ENCODE measurements at regions of chr2 and their contacts with region 1.

Region 1: DNA sequence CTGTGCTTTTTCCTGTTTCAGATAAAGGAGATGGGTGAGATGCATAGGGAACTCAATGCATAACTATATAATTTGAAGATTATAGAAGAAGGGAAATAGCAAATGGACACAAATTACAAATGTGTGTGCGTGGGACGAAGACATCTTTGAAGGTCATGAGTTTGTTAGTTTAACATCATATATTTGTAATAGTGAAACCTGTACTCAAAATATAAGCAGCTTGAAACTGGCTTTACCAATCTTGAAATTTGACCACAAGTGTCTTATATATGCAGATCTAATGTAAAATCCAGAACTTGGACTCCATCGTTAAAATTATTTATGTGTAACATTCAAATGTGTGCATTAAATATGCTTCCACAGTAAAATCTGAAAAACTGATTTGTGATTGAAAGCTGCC is 16.4 kb upstream of the MSH2 start:
- DNase-seq: no peak
- ATAC-seq: no peak
- H3K4me3 ChIP-seq: no peak overlapping the region
- H3K27ac ChIP-seq: no peak overlapping the region
- H3K4me1 ChIP-seq: no peaks in the 10 kb centered on the region
- H3K27me3 ChIP-seq: no peaks in the 10 kb centered on the region

Region 2: DNA sequence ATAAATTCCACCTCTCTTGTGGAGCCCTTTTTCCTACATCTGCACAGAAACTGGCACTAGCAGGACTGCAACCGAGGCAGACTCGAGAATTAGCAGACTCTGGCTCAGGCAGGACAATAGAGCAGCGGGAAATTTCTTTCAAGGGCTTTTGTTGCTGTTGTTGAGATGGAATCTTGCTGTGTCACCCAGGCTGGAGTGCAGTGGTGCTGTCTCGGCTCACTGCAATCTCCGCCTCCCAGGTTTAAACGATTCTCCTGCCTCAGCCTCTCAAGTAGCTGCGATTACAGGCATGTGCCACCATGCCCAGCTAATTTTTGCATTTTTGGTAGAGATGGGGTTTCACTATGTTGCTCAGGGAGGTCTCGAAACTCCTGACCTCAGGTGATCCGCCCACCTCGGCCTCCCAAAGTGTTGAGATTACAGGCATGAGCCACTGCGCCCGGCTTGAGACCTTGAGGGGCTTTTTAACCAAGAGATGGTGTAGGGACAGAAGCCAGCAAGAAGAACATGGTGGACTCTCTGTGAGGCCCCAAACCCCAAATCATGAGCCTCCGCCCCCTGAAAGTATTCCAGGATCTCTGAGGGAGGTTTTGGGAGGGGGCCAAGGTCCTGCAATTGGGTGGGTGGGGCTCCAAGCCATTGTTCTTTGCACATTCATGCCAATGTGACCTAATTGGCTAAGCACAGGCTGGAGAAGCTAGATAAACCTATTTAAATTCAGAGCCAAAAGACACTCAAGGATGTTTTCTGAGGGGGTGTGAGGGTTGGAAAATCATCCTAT is 52.0 kb before region 1 on chr2:
- intact Hi-C with region 1: loop called in 3 of 4 experiments (anchors 2 to 5 kb)
- DNase-seq: peak in 1 of 3 donors; percentile 58
- ATAC-seq: peak; percentile 14 to 65
- H3K4me3 ChIP-seq: no peak overlapping the region
- H3K27ac ChIP-seq: peak overlapping the region; percentile 5
- H3K4me1 ChIP-seq: peaks cover 2% of the 10 kb centered on the region
- H3K27me3 ChIP-seq: no peaks in the 10 kb centered on the region

Region 3: GRCh38 chr2:47339745-47340541 is 46.6 kb before region 1 on chr2:
- intact Hi-C with region 1: loop called (anchors 2 to 5 kb)
- DNase-seq: peak in 1 of 3 donors; percentile 28
- ATAC-seq: no peak
- H3K4me3 ChIP-seq: no peak overlapping the region
- H3K27ac ChIP-seq: no peak overlapping the region
- H3K4me1 ChIP-seq: no peaks in the 10 kb centered on the region
- H3K27me3 ChIP-seq: no peaks in the 10 kb centered on the region

Region 4: GRCh38 chr2:47344890-47345589 is 41.5 kb before region 1 on chr2:
- intact Hi-C with region 1: loop called in 1 of 4 experiments (anchors 5 kb)
- DNase-seq: peak; percentile 62 to 83 (median 78)
- ATAC-seq: peak; percentile 94 to 98
- H3K4me3 ChIP-seq: peak overlapping the region; percentile 50
- H3K27ac ChIP-seq: peak overlapping the region; percentile 79
- H3K4me1 ChIP-seq: peaks cover 4% of the 10 kb centered on the region
- H3K27me3 ChIP-seq: no peaks in the 10 kb centered on the region

Measured in right cardiac atrium (tissue), 5 donors.